GM10248 (cell line): ENCODE measurements at regions of chr12 and their contacts with region 1.

Region 1: GRCh38 chr12:107131832-107132616 is 38.7 kb upstream of the CRY1 start:
- DNase-seq: peak; percentile 51
- CTCF ChIP-seq: peak; percentile 81

Region 2: DNA sequence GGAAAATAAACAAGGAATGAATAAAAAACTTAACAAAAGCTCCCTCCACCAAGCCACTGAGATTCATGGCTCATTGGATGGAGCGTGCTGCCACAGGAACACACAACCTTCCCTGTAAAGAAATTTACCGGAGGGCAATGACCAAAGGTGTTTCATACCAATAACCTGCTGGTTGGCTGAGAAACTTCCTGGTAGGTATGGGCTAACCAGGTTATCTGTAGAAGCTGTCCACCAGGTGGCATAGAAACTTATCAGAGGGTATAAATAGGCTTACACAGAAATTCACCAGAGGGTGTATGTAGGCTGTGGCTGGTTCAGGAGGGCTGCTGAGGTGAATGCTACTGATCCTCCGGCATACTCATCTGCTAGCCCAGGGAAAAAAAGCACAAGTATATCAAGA is 118.0 kb before region 1 on chr12:
- CTCF ChIA-PET with region 1: no interaction called
- POLR2A ChIA-PET with region 1: no interaction called
- DNase-seq: no peak
- CTCF ChIP-seq: no peak

Region 3: GRCh38 chr12:107115119-107115518 is 16.9 kb before region 1 on chr12:
- CTCF ChIA-PET with region 1: interaction called, 26 read pairs
- POLR2A ChIA-PET with region 1: no interaction called
- DNase-seq: no peak
- CTCF ChIP-seq: no peak

Region 4: DNA sequence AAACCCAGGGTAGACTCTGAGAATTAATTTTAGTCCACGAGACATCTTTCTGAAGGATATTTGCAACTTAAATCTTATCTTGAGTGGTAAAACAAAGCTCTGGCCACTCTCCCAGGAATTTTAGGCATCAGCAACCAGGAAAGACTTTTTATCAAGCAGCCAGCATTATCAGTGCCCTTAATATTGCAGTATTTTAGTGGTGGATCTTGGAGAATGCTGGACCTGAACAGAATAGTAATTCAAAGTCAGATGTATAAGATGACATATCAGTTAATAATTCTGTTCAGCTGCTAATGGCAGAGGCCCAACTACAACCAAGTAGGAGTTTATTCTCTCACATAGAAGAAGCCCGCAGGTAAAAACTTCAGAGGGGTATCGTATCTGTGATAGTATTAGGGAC is 20.3 kb after region 1 on chr12:
- CTCF ChIA-PET with region 1: interaction called, 18 read pairs
- POLR2A ChIA-PET with region 1: no interaction called
- DNase-seq: no peak
- CTCF ChIP-seq: no peak

Region 5: DNA sequence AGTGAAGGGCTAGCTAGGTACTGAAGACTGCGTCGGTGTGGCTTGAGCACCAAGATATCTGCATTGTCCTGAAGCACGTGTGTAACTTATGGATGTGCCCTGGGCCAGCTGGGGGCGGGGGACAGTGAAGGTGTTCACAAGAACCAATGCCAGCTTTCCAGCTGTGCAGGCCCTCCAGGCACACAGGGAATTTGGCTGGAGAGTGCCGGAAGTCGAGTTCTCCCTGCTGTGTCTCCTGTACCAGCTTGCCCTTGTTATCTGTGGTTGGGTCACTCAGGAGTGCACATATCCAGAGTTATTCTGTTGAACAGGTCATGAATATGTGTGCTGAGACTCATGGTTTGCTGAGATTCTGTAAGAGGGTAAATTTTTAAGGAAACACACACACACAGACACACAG is 37.2 kb after region 1 on chr12:
- CTCF ChIA-PET with region 1: no interaction called
- POLR2A ChIA-PET with region 1: no interaction called
- DNase-seq: no peak
- CTCF ChIP-seq: no peak

Region 6: GRCh38 chr12:107600581-107601144 is 468.6 kb after region 1 on chr12:
- CTCF ChIA-PET with region 1: interaction called, 281 read pairs
- POLR2A ChIA-PET with region 1: no interaction called
- DNase-seq: no peak
- CTCF ChIP-seq: no peak

Region 7: GRCh38 chr12:107622005-107622404 is 490.0 kb after region 1 on chr12:
- CTCF ChIA-PET with region 1: interaction called, 25 read pairs
- POLR2A ChIA-PET with region 1: no interaction called
- DNase-seq: peak; percentile 31
- CTCF ChIP-seq: peak; percentile 53